Cardiac septum (tissue), 1 donor: ENCODE measurements at regions of chr12 and their contacts with region 1.

Region 1: DNA sequence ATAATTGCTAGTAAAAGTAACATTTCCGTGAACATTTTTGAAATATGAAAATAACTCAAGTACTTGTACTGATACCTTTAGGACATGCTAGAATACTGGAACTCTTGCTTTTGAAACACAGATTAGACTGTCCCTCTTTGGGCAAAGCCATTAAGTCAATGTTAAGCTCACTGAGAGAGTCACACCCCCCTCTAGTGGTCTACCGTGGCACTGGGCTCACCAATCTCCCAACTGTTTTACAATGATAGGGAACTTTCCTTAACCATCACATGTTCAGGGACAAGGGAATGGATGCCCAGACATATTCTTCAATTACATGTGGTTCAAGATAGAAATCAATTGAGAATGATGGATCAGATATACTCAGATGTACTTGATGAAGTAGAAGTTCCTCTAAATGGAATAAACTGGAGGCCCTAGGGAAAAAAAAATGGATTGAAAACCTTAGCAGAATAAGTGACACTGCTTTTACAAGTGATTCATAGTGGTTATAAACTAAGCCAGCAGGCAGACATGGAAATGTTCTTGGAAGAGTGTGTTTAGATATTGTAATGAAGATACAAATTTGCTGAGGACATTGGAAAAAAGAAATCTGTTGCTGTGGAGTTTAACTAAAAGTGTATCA is 17.8 kb downstream of the NANOG start:
- DNase-seq: no peak

Region 2: GRCh38 chr12:7678738-7679137 is 128.2 kb before region 1 on chr12:
- intact Hi-C with region 1: loop called (anchors 5 kb)
- DNase-seq: no peak

Region 3: GRCh38 chr12:7834701-7835100 is 27.7 kb after region 1 on chr12:
- intact Hi-C with region 1: no loop called
- DNase-seq: no peak

Region 4: GRCh38 chr12:7869127-7869526 is 62.2 kb after region 1 on chr12:
- intact Hi-C with region 1: no loop called
- DNase-seq: no peak